IMR-90 (cell line): ENCODE measurements at regions of chr9 and their contacts with region 1.

Region 1: DNA sequence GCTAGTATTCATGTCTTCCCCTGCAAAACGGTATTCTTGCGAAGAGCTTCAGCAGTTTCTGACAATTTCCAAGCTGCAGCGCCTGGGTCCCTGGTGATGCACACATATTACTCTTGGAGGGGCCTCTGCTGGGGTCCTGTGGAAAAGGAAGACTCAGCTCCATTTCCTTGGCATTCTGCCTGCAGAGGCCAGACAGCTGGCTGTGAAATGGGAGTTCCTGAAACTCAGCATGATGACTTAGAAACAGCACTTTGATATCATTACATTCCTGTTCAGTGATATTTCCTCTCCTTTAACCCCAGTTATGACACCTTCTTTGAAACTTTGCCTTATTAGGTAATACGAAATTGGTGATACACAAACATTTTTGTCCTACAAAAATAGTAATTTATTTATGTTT is 98.5 kb downstream of the APBA1 start:
- DNase-seq: peak; percentile 62
- ATAC-seq: peak; percentile 38; the same call in 1 of the 2 replicates
- H3K4me3 ChIP-seq: no peak overlapping the region
- H3K27ac ChIP-seq: no peak overlapping the region
- H3K4me1 ChIP-seq: peaks cover 12% of the 10 kb centered on the region
- H3K27me3 ChIP-seq: no peaks in the 10 kb centered on the region
- CTCF ChIP-seq: no peak
- POLR2A ChIP-seq: no peak
- RAD21 ChIP-seq: no peak

Region 2: DNA sequence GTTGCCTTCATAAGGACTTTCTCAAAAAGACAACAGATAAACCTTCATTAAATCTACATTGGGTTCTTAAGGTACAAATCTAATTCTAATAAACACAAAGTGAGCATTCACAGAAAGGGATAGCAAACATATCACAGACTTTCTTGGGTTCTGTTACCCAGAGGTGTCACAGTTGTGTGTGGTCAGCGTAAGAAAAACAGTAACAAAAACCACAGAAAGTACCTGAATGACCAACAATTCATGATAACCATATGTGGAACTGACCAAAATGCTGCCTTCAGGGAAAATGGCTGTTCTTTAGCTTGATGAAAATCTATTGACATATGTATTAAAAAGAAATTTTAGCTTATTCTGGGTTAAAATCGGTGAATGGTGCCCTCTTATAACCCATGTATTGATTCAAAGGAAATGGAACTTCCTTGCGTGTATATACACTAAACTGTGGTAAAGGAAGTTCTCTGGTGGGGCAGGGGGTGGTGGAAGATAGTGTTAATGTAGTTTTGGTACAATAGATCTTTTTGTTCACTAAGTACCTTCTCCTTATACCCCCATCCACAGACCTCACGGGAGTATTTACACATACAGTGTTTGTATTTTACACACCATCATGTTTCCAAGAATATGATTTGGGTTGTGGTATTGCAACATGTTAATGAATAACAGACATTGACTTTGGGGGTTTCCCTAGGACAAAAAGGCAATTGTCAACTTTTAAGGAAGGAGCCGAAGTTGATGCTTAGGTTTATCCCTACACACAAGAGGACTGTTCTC is 54.0 kb before region 1 on chr9:
- CTCF ChIA-PET with region 1: no interaction called
- POLR2A ChIA-PET with region 1: no interaction called
- dilution Hi-C with region 1: no loop called
- in situ Hi-C with region 1: loop called (anchors 5 kb)
- intact Hi-C with region 1: no loop called
- DNase-seq: no peak
- ATAC-seq: no peak
- H3K4me3 ChIP-seq: no peak overlapping the region
- H3K27ac ChIP-seq: no peak overlapping the region
- H3K4me1 ChIP-seq: no peaks in the 10 kb centered on the region
- H3K27me3 ChIP-seq: no peaks in the 10 kb centered on the region
- CTCF ChIP-seq: no peak
- POLR2A ChIP-seq: no peak
- RAD21 ChIP-seq: no peak

Region 3: DNA sequence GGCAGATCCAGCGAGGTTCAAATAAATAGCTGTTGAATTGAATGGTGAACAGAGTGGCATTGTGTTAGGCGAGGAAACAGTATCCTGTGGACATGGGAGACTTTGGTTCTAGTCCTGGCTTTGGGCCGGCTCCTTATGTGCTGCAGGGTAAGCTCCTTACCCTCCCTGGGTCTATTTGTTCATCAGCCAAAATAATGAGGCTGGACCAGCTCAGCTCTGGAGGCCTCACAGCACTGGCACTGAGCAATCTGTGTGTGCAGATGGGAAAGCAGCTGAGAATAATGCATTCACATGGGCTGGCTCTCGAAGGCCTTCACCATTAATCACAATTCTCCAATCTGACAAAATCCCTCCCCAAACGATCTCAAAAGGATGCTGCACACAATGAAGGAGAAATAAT is 16.6 kb after region 1 on chr9:
- CTCF ChIA-PET with region 1: interaction called, 12 read pairs
- POLR2A ChIA-PET with region 1: no interaction called
- dilution Hi-C with region 1: no loop called
- in situ Hi-C with region 1: no loop called
- intact Hi-C with region 1: no loop called
- DNase-seq: no peak
- ATAC-seq: no peak
- H3K4me3 ChIP-seq: no peak overlapping the region
- H3K27ac ChIP-seq: no peak overlapping the region
- H3K4me1 ChIP-seq: peaks cover 2% of the 10 kb centered on the region; the same call in 1 of the 2 replicates
- H3K27me3 ChIP-seq: no peaks in the 10 kb centered on the region
- CTCF ChIP-seq: no peak
- POLR2A ChIP-seq: no peak
- RAD21 ChIP-seq: no peak